Naive thymus-derived CD8-positive, alpha-beta T cell (primary cell): ENCODE measurements at regions of chr12 and their contacts with region 1.

Region 1: DNA sequence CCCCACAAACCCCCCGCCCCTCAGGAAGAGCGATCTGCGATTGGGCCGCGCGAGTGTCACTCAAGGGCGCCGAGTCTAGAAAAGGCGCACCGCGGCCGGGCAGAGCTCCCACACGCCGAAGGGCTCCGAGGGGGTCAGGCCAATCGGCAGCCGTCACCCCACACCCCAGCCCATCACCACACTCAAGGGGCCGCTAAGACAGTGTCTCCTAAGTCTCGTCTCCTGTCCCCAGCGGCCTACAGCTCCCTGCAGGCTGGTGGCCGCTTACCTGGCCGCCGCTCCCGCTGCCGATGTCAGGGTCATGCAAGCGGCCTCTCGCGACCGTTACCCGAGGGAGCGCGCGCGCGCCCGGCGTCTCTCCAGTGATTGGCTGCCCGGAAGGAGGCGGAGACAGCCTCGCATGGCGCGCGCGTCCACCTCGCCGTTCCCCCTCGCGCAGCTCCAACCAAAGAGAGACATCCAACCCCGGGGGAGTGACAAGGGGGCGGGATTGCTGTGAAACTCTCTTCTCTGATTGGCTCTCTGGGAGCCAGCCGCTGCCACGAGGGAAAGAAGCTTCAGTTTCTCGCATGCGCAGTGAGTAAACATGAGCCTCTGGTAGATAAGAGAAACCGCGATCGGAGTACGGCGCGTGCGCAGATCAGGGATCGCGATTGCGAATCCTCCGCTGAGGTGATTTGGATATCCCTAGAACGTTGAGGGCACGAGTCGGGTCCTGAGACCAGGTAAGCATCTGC is at the starts of genes MPHOSPH9 and MTRFR:
- DNase-seq: peak; percentile 96 to 100 (median 99)
- ATAC-seq: peak; percentile 86 to 90
- H3K4me3 Mint-ChIP-seq: peak within 1 kb of the TSS; percentile 96 to 100 (median 99)
- H3K27ac Mint-ChIP-seq: peak within 1 kb of the TSS; percentile 98 to 100 (median 99)
- H3K4me1 Mint-ChIP-seq: peaks cover 22 to 86% (median 71%) of the 10 kb centered on the region in 4 donors
- H3K27me3 Mint-ChIP-seq: peaks cover 0 to 2% (median 0%) of the 10 kb centered on the region in 5 donors
- polyA plus RNA-seq, gene MPHOSPH9: 33.9 to 53.4 (median 44.8) TPM
- polyA plus RNA-seq, gene MTRFR: 45.2 to 63.6 (median 56.5) TPM

Region 2: DNA sequence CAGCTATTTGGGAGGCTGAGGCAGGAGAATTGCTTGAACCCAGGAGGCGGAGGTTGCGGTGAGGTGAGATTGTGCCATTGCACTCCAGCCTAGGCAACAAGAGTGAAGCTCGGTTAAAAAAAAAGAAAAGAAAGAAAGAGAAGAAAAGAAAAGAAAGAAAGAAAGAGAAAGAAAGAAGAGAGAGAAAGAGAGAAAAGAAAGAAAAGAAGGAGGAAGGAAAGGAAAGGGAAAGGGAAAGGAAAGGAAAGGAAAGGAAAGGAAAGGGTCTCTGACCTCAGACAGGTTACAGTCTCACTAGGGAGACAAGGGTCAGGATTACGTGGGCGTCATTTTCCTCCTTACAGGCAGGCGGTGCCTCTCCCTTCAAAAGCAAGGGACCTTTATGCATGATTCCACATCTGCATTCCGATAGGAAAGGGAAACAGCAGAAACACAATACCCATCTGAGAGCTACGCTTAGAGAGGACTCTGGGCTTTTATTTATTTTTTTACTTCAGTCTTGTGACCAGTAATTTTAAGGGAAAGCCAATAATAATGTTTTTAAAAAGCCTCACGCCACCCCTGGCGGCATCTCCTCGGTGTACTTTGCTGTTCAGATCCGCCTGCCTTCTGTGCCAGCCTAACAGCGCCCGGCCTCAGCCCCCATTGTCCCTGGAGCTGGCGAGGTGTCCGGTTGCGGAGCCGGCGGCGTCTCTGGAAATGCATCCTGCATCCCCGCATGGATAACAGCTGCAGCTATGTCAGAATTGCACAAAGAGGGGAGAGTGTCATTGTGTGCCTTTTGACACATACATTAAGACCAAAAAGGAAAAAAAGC is 398.7 kb before region 1 on chr12:
- POLR2A ChIA-PET with region 1: interaction called, 15 read pairs
- DNase-seq: peak in 4 of 10 donors; percentile 17 to 58 (median 29)
- ATAC-seq: peak; percentile 15 to 24
- H3K4me3 Mint-ChIP-seq: peak overlapping the region; percentile 88 to 98 (median 96)
- H3K27ac Mint-ChIP-seq: peak overlapping the region; percentile 85 to 98 (median 94)
- H3K4me1 Mint-ChIP-seq: peaks cover 24 to 50% (median 38%) of the 10 kb centered on the region in 4 donors
- H3K27me3 Mint-ChIP-seq: no peaks in the 10 kb centered on the region

Region 3: DNA sequence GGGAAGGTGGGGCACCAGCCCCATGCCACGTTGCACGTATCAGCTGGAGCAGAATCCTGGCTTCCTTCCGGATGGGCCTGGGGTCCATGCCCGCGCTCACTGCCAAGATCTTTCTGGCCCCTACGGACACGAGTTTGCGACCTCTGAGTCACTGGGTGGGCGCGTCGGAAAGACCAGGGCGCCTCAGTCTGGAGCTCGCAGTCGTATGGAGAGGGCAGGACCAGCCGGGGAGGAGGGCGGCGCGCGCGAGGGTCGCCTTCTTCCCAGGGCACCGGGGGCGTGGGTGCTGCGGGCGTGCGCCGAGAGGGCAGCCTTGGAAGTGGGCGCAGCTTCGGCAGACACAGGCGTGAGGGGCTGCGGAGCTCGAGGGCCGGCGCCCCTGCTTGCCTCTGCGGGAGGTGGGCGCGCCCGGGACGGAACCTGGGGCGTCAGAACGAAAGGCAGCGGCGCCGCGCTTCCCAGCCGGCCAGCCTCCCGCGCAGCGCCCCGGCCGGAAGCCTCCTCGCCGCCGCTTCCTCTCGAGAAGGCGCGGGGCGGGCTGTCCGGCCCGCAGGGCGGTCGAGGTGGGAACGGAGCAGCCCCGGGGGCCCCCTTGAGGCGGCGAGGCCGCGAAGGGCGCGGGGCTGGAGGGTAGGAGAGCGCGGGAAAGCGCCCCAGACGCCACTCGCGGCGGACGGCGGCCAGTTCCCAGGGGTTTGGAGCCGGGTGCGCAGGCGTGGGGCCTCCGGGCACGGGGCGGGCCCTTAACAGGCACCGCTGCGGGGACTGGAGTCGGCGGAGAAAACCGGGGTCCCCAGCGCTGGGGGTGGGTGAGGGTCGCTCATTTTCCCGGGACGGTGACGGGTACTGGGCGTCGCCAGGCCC is 252.6 kb before region 1 on chr12 and contains the start of gene ARL6IP4:
- POLR2A ChIA-PET with region 1: interaction called, 36 read pairs
- DNase-seq: peak; percentile 42 to 79 (median 60)
- ATAC-seq: peak; percentile 78
- H3K4me3 Mint-ChIP-seq: peak within 1 kb of the TSS; percentile 85 to 92 (median 89)
- H3K27ac Mint-ChIP-seq: peak within 1 kb of the TSS; percentile 75 to 93 (median 90)
- H3K4me1 Mint-ChIP-seq: peaks cover 24 to 80% (median 68%) of the 10 kb centered on the region in 4 donors
- H3K27me3 Mint-ChIP-seq: no peaks in the 10 kb centered on the region
- polyA plus RNA-seq, gene ARL6IP4: 209 to 256 (median 222) TPM

Region 4: DNA sequence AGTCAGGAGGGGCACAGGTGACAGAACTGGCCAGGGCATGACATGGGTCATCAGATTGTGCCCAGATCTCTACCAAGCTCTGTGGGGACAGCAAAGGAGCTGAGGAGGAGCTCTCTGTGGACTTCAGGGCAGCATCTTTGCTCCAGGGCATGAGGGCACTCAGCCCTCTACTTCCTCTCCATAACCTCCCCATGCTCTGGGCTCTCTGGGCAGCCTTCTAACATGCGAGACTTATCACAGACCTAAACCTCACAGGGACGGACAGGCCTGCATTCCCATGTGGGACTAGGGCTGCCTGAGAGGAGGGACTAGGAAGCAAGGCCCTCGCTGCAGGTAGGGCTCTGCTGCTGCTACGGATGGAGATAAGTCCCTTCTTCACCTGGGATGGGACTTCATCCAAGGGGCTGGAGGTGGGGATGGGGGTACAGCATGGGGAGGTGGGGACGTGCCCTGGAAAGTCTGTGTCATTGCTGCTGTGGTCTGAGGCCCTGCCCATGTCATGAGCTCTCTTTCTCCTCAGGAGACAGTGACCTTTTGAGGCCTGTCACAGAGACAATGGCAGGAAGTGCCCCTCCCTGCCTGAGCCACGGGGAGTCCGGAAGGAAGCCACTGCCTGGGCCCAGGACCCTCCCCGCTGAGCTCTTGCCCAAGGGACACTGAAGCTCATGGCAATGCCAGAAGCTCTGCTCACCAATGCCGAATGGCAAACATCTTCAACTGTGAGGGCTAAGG is 126.2 kb before region 1 on chr12:
- POLR2A ChIA-PET with region 1: interaction called, 16 read pairs
- DNase-seq: peak in 9 of 10 donors; percentile 23 to 78 (median 45)
- ATAC-seq: peak; percentile 91
- H3K4me3 Mint-ChIP-seq: peak overlapping the region; percentile 43 to 84 (median 76)
- H3K27ac Mint-ChIP-seq: peak overlapping the region; percentile 89 to 97 (median 96)
- H3K4me1 Mint-ChIP-seq: peaks cover 44 to 76% (median 72%) of the 10 kb centered on the region in 4 donors
- H3K27me3 Mint-ChIP-seq: no peaks in the 10 kb centered on the region

Region 5: DNA sequence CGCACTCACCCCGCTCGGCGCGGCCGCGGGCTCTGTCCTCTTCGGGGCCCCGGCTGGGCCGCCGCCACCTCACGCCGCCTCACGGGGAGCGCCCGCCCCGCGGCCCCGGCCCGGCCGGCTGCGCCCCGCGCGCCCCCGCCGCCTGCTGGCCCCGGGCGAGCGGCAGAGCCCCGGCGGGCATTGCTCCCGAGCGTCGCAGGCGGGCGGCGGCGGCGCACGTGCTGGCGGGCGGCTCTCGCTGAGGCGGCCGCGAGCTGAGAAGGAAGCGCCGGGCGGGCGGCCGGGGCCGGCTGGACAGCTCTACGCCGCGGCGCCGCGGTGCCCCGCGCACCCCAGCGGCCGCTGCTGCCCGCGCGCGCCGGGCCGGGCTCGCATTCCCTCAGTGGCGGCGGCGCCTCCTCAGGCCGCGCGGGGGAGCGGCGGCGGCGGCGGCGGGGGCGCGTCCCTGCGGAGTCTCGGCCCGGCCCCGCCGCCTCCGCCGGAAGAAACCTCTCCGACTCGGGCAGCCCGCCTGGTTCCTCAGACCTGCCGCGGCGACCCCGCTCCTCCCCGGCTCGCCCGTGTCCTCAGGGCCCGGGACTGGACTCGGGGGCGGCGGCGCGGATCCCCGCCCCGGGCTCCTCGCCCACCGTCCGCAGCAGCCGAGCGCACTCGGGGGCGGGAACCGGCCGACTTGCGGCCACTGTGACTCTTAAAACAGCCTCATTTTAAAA is 82.1 kb before region 1 on chr12 and contains the start of gene PITPNM2:
- POLR2A ChIA-PET with region 1: interaction called, 26 read pairs
- DNase-seq: peak; percentile 47 to 76 (median 62)
- ATAC-seq: peak; percentile 87
- H3K4me3 Mint-ChIP-seq: peak within 1 kb of the TSS; percentile 73 to 93 (median 86)
- H3K27ac Mint-ChIP-seq: peak within 1 kb of the TSS; percentile 81 to 93 (median 91)
- H3K4me1 Mint-ChIP-seq: peaks cover 30 to 50% (median 46%) of the 10 kb centered on the region in 4 donors
- H3K27me3 Mint-ChIP-seq: no peaks in the 10 kb centered on the region
- polyA plus RNA-seq, gene PITPNM2: 4.0 to 6.3 (median 4.7) TPM

Region 6: GRCh38 chr12:123250484-123251383 is 17.8 kb after region 1 on chr12:
- POLR2A ChIA-PET with region 1: interaction called, 13 read pairs
- DNase-seq: no peak
- ATAC-seq: no peak
- H3K4me3 Mint-ChIP-seq: peak overlapping the region in 8 of 10 donors; percentile 26 to 68 (median 48)
- H3K27ac Mint-ChIP-seq: peak overlapping the region; percentile 63 to 89 (median 74)
- H3K4me1 Mint-ChIP-seq: peaks cover 36 to 68% (median 62%) of the 10 kb centered on the region in 4 donors
- H3K27me3 Mint-ChIP-seq: no peaks in the 10 kb centered on the region